ENCODE measurements at regions of chr16 and their contacts with region 1.

Region 1: DNA sequence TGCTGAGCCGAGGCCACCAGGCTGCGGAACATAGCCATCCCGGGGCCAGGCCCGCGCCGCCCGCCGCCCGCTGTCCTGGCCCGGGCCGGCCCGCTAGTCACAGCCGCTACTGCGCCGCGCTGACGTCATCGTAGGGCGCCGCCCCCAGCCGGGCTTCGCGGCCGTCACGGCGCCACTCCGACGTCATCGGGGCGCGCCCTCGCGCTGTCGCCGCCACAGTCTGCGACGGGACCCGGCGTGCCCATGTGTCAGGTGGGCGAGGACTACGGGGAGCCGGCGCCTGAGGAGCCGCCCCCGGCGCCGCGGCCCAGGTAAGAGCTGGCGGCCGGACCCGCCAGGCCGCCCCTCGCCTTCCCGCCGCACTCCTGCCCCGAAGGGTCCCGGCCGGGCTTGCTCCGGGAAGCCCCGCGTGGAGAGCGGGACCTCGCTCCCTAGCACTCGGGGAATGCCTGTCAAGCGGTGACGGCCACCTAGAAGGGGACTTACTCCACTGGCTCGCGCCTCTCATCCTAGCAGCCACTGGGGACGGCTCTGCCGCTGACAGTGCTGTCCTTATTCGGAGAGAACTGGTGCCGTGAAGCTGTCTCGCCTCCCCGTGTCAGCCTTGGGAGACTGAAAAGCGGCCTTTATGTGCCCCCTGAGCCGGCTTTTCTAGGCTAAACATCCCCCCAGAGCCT is at the starts of genes CTU2 and RNF166:
- DNase-seq: peak; percentile 94
- H3K4me3 Mint-ChIP-seq: peak within 1 kb of the TSS; percentile 82
- H3K27ac Mint-ChIP-seq: peak within 1 kb of the TSS; percentile 91
- H3K4me1 Mint-ChIP-seq: peaks cover 47% of the 10 kb centered on the region
- H3K27me3 Mint-ChIP-seq: no peaks in the 10 kb centered on the region
- total RNA-seq, gene CTU2: 38.0 to 41.6 TPM
- total RNA-seq, gene RNF166: 46.4 to 55.6 TPM

Region 2: DNA sequence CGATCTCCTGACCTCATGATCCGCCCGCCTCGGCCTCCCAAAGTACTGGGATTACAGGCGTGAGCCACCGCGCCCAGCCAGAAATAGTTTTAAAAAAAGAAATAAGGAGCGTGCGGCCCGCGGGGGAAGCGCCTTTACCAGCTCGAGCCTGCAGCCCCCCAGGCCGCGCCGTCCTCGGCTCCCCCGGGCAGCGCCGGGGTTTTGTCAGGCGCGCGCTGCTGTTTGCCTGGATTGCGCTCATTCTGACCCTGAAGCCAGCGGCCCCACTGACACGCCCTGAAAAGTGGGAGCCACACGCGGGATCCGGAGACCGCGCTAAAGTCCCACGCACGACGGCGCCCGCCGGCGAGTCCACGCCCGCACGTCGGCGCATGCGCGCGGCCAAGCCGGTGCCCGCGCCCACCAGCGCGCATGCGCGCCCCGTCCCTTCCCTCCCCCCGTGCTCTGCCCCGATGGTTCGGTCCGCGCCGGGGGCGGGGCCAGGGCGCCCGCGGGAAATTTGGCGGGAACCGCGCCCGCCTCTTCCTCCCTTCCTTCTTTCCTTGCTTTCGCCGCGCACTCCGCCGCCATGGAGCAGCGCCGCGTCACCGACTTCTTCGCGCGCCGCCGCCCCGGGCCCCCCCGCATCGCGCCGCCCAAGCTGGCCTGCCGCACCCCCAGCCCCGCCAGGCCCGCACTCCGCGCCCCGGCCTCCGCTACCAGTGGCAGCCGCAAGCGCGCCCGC is 97.0 kb after region 1 on chr16 and contains the start of gene CDT1:
- CTCF ChIA-PET with region 1: no interaction called
- POLR2A ChIA-PET with region 1: interaction called, 28 read pairs
- intact Hi-C with region 1: loop called (anchors 5 kb)
- DNase-seq: peak; percentile 90
- H3K4me3 Mint-ChIP-seq: peak within 1 kb of the TSS; percentile 84
- H3K27ac Mint-ChIP-seq: peak within 1 kb of the TSS; percentile 91
- H3K4me1 Mint-ChIP-seq: peaks cover 27% of the 10 kb centered on the region
- H3K27me3 Mint-ChIP-seq: no peaks in the 10 kb centered on the region
- total RNA-seq, gene CDT1: 169 to 183 TPM

Region 3: GRCh38 chr16:88856828-88857733 is 150.7 kb after region 1 on chr16 and contains the starts of genes GALNS and TRAPPC2L:
- CTCF ChIA-PET with region 1: interaction called, 4 read pairs
- POLR2A ChIA-PET with region 1: interaction called, 3 read pairs
- intact Hi-C with region 1: loop called (anchors 1 kb)
- DNase-seq: peak; percentile 99
- H3K4me3 Mint-ChIP-seq: peak within 1 kb of the TSS; percentile 93
- H3K27ac Mint-ChIP-seq: peak within 1 kb of the TSS; percentile 72
- H3K4me1 Mint-ChIP-seq: peaks cover 23% of the 10 kb centered on the region
- H3K27me3 Mint-ChIP-seq: no peaks in the 10 kb centered on the region
- total RNA-seq, gene GALNS: 22.0 to 24.1 TPM
- total RNA-seq, gene TRAPPC2L: 63.6 to 71.5 TPM

Measured in activated CD4-positive, alpha-beta memory T cell treated with anti-CD3 and anti-CD28 coated beads for 36 hours (primary cell).